ENCODE measurements at regions of chr9 and their contacts with region 1.

Region 1: DNA sequence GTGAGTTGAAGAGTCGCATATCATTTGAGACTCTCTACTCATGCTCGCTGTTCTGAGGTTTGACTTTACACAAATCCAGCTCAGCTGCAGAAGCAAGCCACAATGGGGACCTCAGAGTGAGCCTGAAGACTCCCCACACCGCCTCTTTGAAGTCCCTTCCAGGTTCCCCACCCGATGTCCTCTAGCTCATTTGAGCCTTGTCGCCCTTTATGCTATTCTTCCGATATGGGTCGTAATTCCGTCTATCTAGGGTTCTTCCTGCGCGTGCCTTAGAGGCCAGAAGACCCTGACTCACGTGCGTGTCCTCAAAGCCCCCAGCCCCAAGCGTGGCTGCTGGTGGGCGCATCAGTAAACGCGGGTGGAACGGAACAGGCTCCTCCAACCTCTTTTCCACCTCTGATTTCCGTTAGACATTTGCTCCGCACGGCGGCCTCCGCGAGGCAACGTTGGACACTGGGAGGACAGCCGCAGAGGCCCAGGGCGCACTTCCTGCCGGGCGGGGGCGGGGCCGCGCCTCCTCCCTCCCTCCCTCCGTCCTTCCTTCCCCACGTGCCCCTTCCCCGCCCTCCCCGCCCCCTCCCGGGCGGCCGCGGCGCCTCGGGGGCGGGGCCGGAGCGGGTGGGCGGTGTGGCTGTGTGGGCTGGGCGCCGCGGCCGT is at the start of gene SNX30:
- DNase-seq: peak; percentile 42 to 91 (median 78)
- ATAC-seq: peak; percentile 67
- H3K4me3 ChIP-seq: peak within 1 kb of the TSS; percentile 66 to 72
- H3K4me3 Mint-ChIP-seq: peak within 1 kb of the TSS; percentile 91
- H3K27ac ChIP-seq: peak within 1 kb of the TSS; percentile 44 to 83
- H3K27ac Mint-ChIP-seq: peak within 1 kb of the TSS; percentile 94
- H3K4me1 ChIP-seq: peaks cover 47% of the 10 kb centered on the region
- H3K4me1 Mint-ChIP-seq: peaks cover 64% of the 10 kb centered on the region
- H3K27me3 ChIP-seq: no peaks in the 10 kb centered on the region
- H3K27me3 Mint-ChIP-seq: no peaks in the 10 kb centered on the region
- CTCF ChIP-seq: no peak
- total RNA-seq, gene SNX30: 6.0 to 8.1 TPM

Region 2: GRCh38 chr9:112379177-112380101 is 370.8 kb before region 1 on chr9:
- CTCF ChIA-PET with region 1: no interaction called
- POLR2A ChIA-PET with region 1: interaction called, 5 read pairs
- intact Hi-C with region 1: loop called (anchors 1 to 5 kb)
- DNase-seq: peak; percentile 93 to 99 (median 97)
- ATAC-seq: peak; percentile 95
- H3K4me3 ChIP-seq: peak overlapping the region; percentile 81 to 96
- H3K4me3 Mint-ChIP-seq: peak overlapping the region; percentile 99
- H3K27ac ChIP-seq: peak overlapping the region; percentile 77 to 92
- H3K27ac Mint-ChIP-seq: peak overlapping the region; percentile 96
- H3K4me1 ChIP-seq: peaks cover 27% of the 10 kb centered on the region
- H3K4me1 Mint-ChIP-seq: peaks cover 54% of the 10 kb centered on the region
- H3K27me3 ChIP-seq: no peaks in the 10 kb centered on the region
- H3K27me3 Mint-ChIP-seq: no peaks in the 10 kb centered on the region
- CTCF ChIP-seq: no peak

Region 3: GRCh38 chr9:112731971-112732370 is 18.3 kb before region 1 on chr9:
- CTCF ChIA-PET with region 1: no interaction called
- POLR2A ChIA-PET with region 1: interaction called, 3 read pairs
- intact Hi-C with region 1: loop called in 1 of 2 experiments (anchors 2 kb)
- DNase-seq: no peak
- ATAC-seq: no peak
- H3K4me3 ChIP-seq: no peak overlapping the region
- H3K4me3 Mint-ChIP-seq: no peak overlapping the region
- H3K27ac ChIP-seq: no peak overlapping the region
- H3K27ac Mint-ChIP-seq: no peak overlapping the region
- H3K4me1 ChIP-seq: no peaks in the 10 kb centered on the region
- H3K4me1 Mint-ChIP-seq: peaks cover 7% of the 10 kb centered on the region
- H3K27me3 ChIP-seq: no peaks in the 10 kb centered on the region
- H3K27me3 Mint-ChIP-seq: no peaks in the 10 kb centered on the region
- CTCF ChIP-seq: no peak

Region 4: GRCh38 chr9:113148781-113149510 is 398.7 kb after region 1 on chr9:
- CTCF ChIA-PET with region 1: no interaction called
- POLR2A ChIA-PET with region 1: no interaction called
- intact Hi-C with region 1: no loop called
- DNase-seq: no peak
- ATAC-seq: no peak
- H3K4me3 ChIP-seq: no peak overlapping the region
- H3K4me3 Mint-ChIP-seq: no peak overlapping the region
- H3K27ac ChIP-seq: no peak overlapping the region
- H3K27ac Mint-ChIP-seq: no peak overlapping the region
- H3K4me1 ChIP-seq: peaks cover 14% of the 10 kb centered on the region
- H3K4me1 Mint-ChIP-seq: peaks cover 21% of the 10 kb centered on the region
- H3K27me3 ChIP-seq: peaks cover 0 to 3% of the 10 kb centered on the region in 2 experiments
- H3K27me3 Mint-ChIP-seq: peaks cover 7% of the 10 kb centered on the region
- CTCF ChIP-seq: no peak

Measured in CD8-positive, alpha-beta T cell (primary cell).